ENCODE measurements at regions of chr3 and their contacts with region 1.

Region 1: GRCh38 chr3:181302960-181303359 is 313.4 kb upstream of the DNAJC19 start:
- DNase-seq: no peak
- ATAC-seq: no peak
- H3K4me3 ChIP-seq: no peak overlapping the region
- H3K27ac ChIP-seq: no peak overlapping the region
- H3K4me1 ChIP-seq: no peaks in the 10 kb centered on the region
- H3K27me3 ChIP-seq: no peaks in the 10 kb centered on the region

Region 2: GRCh38 chr3:181252631-181253030 is 50.3 kb before region 1 on chr3:
- intact Hi-C with region 1: no loop called
- DNase-seq: no peak
- ATAC-seq: no peak
- H3K4me3 ChIP-seq: no peak overlapping the region
- H3K27ac ChIP-seq: no peak overlapping the region
- H3K4me1 ChIP-seq: no peaks in the 10 kb centered on the region
- H3K27me3 ChIP-seq: no peaks in the 10 kb centered on the region

Region 3: GRCh38 chr3:181265717-181266333 is 37.1 kb before region 1 on chr3:
- intact Hi-C with region 1: loop called in 1 of 4 experiments (anchors 2 kb)
- DNase-seq: no peak
- ATAC-seq: no peak
- H3K4me3 ChIP-seq: no peak overlapping the region
- H3K27ac ChIP-seq: no peak overlapping the region
- H3K4me1 ChIP-seq: no peaks in the 10 kb centered on the region
- H3K27me3 ChIP-seq: no peaks in the 10 kb centered on the region

Measured in right cardiac atrium (tissue), 5 donors.